ENCODE measurements at regions of chr19 and their contacts with region 1.

Region 1: GRCh38 chr19:37370880-37371661 is at the start of gene ZNF527:
- DNase-seq: peak; percentile 93 to 96
- H3K4me3 ChIP-seq: peak within 1 kb of the TSS; percentile 63 to 74
- H3K27ac ChIP-seq: peak within 1 kb of the TSS; percentile 73
- H3K4me1 ChIP-seq: peaks cover 9% of the 10 kb centered on the region
- H3K27me3 ChIP-seq: no peaks in the 10 kb centered on the region
- CTCF ChIP-seq: peak in 1 of 3 experiments; percentile 17
- POLR2A ChIP-seq: peak in 1 of 2 donors; percentile 62
- total RNA-seq, gene ZNF527: 18.2 TPM

Region 2: DNA sequence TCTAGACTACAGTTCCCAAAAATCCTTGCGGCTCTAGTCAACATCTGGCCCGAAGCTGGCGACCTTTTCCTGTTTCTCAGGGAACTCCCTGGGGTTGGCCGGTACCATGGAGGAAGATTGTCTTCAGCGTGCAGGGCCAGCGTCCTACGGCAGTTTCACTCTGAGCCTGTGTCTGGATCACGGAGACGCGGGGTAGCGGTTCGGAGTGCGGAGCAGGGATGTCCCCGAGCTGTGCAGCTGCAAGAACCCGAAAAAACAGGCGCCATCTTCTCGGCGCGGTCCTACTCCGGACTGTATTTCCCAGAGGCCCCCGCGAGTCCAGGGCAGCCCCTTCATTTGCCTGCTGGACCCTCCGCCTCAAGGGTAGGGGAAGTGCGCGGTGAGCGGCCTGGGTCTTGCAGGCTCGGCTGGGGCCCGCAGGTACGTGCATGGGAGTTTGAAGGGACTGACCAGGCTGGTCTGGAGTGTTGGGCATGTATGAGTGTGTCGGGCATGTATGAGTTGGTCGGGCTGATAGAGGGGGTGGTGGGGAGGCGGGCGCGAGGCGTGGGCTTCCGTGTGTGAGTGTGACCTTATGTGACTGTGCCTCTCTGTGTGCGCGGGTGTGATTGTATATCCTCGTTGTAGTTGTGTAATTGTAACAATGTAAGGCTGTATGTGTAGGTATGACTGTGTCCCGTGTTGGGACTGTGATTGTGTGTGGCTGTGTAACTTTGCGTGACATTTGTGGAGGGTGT is 153.0 kb before region 1 on chr19 and contains the start of gene ZNF383:
- intact Hi-C with region 1: loop called (anchors 10 kb)
- DNase-seq: peak; percentile 90 to 96
- H3K4me3 ChIP-seq: peak within 1 kb of the TSS; percentile 78 to 98
- H3K27ac ChIP-seq: peak within 1 kb of the TSS; percentile 91
- H3K4me1 ChIP-seq: peaks cover 25% of the 10 kb centered on the region
- H3K27me3 ChIP-seq: no peaks in the 10 kb centered on the region
- CTCF ChIP-seq: no peak
- POLR2A ChIP-seq: no peak
- total RNA-seq, gene ZNF383: 6.4 TPM

Region 3: GRCh38 chr19:37342753-37343152 is 28.3 kb before region 1 on chr19:
- intact Hi-C with region 1: no loop called
- DNase-seq: no peak
- H3K4me3 ChIP-seq: no peak overlapping the region
- H3K27ac ChIP-seq: no peak overlapping the region
- H3K4me1 ChIP-seq: peaks cover 9% of the 10 kb centered on the region
- H3K27me3 ChIP-seq: no peaks in the 10 kb centered on the region
- CTCF ChIP-seq: no peak
- POLR2A ChIP-seq: no peak

Region 4: GRCh38 chr19:37466798-37467607 is 95.9 kb after region 1 on chr19 and contains the start of gene ZNF569:
- intact Hi-C with region 1: no loop called
- DNase-seq: peak; percentile 90 to 96
- H3K4me3 ChIP-seq: peak within 1 kb of the TSS; percentile 73 to 82
- H3K27ac ChIP-seq: peak within 1 kb of the TSS; percentile 83
- H3K4me1 ChIP-seq: peaks cover 31% of the 10 kb centered on the region
- H3K27me3 ChIP-seq: no peaks in the 10 kb centered on the region
- CTCF ChIP-seq: no peak
- POLR2A ChIP-seq: no peak
- total RNA-seq, gene ZNF569: 3.7 TPM

Measured in vagina (tissue), 2 donors.